ENCODE measurements at regions of chr18 and their contacts with region 1.

Region 1: DNA sequence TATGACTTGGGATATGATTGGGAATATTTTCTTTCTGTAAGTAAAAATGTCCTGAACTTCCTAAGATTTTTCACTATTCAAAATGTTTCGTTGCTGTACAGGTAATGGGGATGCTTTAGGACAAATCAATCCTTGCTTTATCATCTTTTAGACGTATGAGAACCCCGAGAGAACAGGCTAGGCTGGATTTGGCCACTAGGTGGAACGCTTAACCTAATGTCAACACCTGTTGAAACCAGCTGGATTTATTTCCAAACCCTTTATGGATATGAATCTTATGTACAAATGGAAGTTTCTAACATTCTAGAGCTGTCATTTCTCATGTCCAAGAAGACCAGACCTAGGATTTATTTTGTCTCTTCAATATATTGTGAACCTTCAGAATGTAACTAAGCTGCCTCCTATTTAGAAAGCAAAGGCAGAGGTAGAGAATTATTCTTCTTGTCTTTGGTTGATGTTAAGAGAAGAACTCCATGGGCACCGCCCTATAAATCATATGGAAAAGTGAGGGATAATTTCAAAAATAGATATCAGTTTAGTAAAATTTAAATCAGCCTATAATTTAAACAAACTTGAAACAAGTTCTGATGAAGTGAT is 96.7 kb downstream of the PMAIP1 start:
- DNase-seq: peak; percentile 45
- H3K4me3 ChIP-seq: no peak overlapping the region
- H3K27ac ChIP-seq: no peak overlapping the region
- H3K4me1 ChIP-seq: no peaks in the 10 kb centered on the region
- CTCF ChIP-seq: peak; percentile 83

Region 2: GRCh38 chr18:59606193-59607077 is 390.0 kb before region 1 on chr18:
- CTCF ChIA-PET with region 1: no interaction called
- POLR2A ChIA-PET with region 1: no interaction called
- intact Hi-C with region 1: no loop called
- DNase-seq: no peak
- H3K4me3 ChIP-seq: no peak overlapping the region
- H3K27ac ChIP-seq: no peak overlapping the region
- H3K4me1 ChIP-seq: no peaks in the 10 kb centered on the region
- CTCF ChIP-seq: no peak

Region 3: DNA sequence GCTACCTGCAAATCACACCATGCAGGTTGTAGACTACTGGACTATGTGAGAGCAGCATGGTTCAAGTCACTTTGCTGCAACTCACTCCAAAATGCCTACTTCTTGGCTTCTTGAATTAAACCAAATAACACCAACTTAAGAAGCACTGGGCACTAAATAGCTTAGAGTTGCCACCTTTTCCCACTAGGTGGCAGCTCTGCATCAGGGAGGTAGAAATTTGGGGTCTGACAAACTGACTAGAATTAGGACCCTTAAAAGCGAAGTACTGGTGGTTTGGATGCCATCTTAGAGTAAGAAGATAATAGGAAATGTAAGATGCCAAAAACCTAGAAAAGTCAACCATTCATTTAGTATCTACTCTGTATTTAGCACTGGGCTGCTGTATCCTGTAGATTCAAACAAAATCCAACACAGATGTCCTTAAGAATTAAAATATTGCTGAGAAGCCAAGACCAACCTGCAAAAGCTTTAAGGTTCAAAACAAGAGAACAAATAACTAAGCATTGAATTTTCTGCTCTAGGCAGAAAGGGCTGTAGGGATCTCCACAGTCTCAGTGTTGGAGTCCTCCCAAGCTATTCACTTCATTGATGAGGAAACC is 364.8 kb before region 1 on chr18:
- CTCF ChIA-PET with region 1: no interaction called
- POLR2A ChIA-PET with region 1: no interaction called
- intact Hi-C with region 1: loop called (anchors 5 kb)
- DNase-seq: peak; percentile 2
- H3K4me3 ChIP-seq: no peak overlapping the region
- H3K27ac ChIP-seq: no peak overlapping the region
- H3K4me1 ChIP-seq: no peaks in the 10 kb centered on the region
- CTCF ChIP-seq: peak; percentile 73

Region 4: GRCh38 chr18:59783138-59783537 is 213.3 kb before region 1 on chr18:
- CTCF ChIA-PET with region 1: no interaction called
- POLR2A ChIA-PET with region 1: no interaction called
- intact Hi-C with region 1: loop called (anchors 5 kb)
- DNase-seq: peak; percentile 51
- H3K4me3 ChIP-seq: no peak overlapping the region
- H3K27ac ChIP-seq: no peak overlapping the region
- H3K4me1 ChIP-seq: no peaks in the 10 kb centered on the region
- CTCF ChIP-seq: peak; percentile 74

Region 5: GRCh38 chr18:59971871-59972428 is 24.5 kb before region 1 on chr18:
- CTCF ChIA-PET with region 1: no interaction called
- POLR2A ChIA-PET with region 1: no interaction called
- intact Hi-C with region 1: no loop called
- DNase-seq: no peak
- H3K4me3 ChIP-seq: no peak overlapping the region
- H3K27ac ChIP-seq: no peak overlapping the region
- H3K4me1 ChIP-seq: no peaks in the 10 kb centered on the region
- CTCF ChIP-seq: no peak

Region 6: GRCh38 chr18:60123031-60123430 is 126.6 kb after region 1 on chr18:
- CTCF ChIA-PET with region 1: no interaction called
- POLR2A ChIA-PET with region 1: no interaction called
- intact Hi-C with region 1: no loop called
- DNase-seq: no peak
- H3K4me3 ChIP-seq: no peak overlapping the region
- H3K27ac ChIP-seq: no peak overlapping the region
- H3K4me1 ChIP-seq: no peaks in the 10 kb centered on the region
- CTCF ChIP-seq: no peak

Region 7: DNA sequence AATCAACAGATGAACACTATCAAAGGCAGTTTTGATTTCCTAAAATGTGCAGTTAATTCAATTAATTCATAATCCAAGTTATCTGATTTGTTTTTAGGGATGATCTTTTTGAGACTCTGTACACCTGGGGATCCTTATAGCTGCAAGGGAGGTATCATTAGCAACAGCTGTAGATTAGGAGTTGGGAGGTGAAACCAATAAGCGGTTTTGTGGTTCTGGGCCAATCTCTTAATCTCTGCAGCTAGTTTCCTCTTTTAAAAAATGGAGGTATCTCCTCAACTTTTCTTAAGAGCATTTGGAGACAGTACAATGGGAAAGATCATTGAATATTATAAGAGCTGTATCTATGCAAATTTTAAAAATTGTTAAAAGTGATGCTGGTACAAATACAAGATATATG is 250.1 kb after region 1 on chr18:
- CTCF ChIA-PET with region 1: no interaction called
- POLR2A ChIA-PET with region 1: no interaction called
- intact Hi-C with region 1: loop called (anchors 10 kb)
- DNase-seq: peak; percentile 49
- H3K4me3 ChIP-seq: peak overlapping the region; percentile 28
- H3K27ac ChIP-seq: peak overlapping the region; percentile 94
- H3K4me1 ChIP-seq: peaks cover 50% of the 10 kb centered on the region
- CTCF ChIP-seq: no peak

Region 8: DNA sequence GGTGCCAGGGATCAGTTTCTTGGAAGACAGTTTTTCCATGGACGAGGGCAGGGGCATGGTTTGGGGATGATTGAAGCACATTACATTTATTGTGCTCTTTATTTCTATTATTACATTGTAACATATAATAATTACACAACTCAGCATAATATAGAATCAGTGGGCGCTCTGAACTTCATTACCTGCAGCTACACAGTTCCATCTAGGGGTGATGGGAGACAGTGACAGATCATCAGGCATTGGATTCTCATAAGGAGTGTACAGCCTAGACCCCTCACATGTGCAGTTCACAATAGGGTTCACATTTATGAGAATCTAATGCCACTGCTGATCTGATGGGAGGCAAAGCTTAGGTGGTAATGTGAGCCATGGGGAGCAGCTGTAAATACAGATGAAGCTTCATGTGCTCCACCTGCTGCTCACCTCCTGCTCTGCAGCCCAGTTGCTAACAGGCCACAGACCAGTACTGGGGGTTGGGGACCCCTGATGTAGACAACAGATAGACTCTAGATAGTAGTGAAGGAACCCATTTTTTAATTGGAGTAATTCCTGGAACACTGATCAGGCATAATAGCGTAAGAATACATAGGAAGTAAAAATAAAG is 417.6 kb after region 1 on chr18:
- CTCF ChIA-PET with region 1: no interaction called
- POLR2A ChIA-PET with region 1: no interaction called
- intact Hi-C with region 1: loop called (anchors 2 kb)
- DNase-seq: peak; percentile 37
- H3K4me3 ChIP-seq: no peak overlapping the region
- H3K27ac ChIP-seq: no peak overlapping the region
- H3K4me1 ChIP-seq: no peaks in the 10 kb centered on the region
- CTCF ChIP-seq: peak; percentile 75

Region 9: GRCh38 chr18:60549338-60549960 is 553.0 kb after region 1 on chr18:
- CTCF ChIA-PET with region 1: no interaction called
- POLR2A ChIA-PET with region 1: no interaction called
- intact Hi-C with region 1: loop called (anchors 2 kb)
- DNase-seq: peak; percentile 70
- H3K4me3 ChIP-seq: no peak overlapping the region
- H3K27ac ChIP-seq: no peak overlapping the region
- H3K4me1 ChIP-seq: no peaks in the 10 kb centered on the region
- CTCF ChIP-seq: peak; percentile 81